ENCODE measurements at regions of chr13 and their contacts with region 1.

Region 1: DNA sequence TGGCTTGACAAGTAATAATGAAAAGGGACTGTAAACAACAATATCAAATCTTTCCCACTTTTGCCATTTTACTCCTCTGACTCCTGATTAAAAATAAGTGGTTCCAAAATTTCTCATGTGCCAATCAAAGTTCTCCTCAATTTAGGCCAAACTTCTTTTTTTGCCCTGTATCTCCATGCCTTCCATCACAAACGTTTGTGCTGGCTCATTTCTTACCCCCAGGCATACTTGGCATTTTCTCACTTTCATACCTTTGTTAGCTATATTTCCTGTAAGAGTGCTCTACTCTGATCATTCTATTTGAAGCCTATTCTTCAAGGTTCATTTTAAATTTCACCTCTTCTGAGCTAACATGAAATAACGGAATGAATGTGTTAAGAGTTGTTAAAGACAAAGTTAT is 10.0 kb upstream of the FNDC3A start:
- DNase-seq: no peak
- H3K4me3 Mint-ChIP-seq: no peak overlapping the region
- H3K27ac Mint-ChIP-seq: no peak overlapping the region
- H3K4me1 Mint-ChIP-seq: no peaks in the 10 kb centered on the region
- H3K27me3 Mint-ChIP-seq: peaks cover 2% of the 10 kb centered on the region

Region 2: DNA sequence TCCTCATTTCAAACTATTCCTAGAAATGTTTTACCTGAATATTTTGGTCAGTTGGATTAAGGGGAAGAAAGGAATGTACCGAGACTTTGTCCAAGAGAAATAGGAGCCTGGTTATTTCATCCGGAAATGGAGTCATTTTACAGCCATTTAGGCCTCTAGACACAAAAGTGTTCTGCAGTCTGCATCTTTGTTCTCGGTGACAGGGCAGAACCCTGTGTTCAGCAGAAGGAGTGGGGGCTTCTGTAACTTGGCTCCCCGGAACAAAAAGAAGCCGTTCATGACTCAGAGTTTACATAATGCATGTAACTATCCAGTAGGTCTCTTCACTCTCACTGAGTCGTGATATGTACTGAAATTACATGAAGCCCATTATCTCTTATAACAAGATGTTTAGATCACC is 11.7 kb before region 1 on chr13:
- CTCF ChIA-PET with region 1: interaction called, 3 read pairs
- intact Hi-C with region 1: loop called (anchors 1 kb)
- DNase-seq: no peak
- H3K4me3 Mint-ChIP-seq: no peak overlapping the region
- H3K27ac Mint-ChIP-seq: no peak overlapping the region
- H3K4me1 Mint-ChIP-seq: no peaks in the 10 kb centered on the region
- H3K27me3 Mint-ChIP-seq: no peaks in the 10 kb centered on the region

Region 3: GRCh38 chr13:49033101-49033500 is 67.4 kb after region 1 on chr13:
- CTCF ChIA-PET with region 1: no interaction called
- intact Hi-C with region 1: no loop called
- DNase-seq: no peak
- H3K4me3 Mint-ChIP-seq: no peak overlapping the region
- H3K27ac Mint-ChIP-seq: no peak overlapping the region
- H3K4me1 Mint-ChIP-seq: peaks cover 12% of the 10 kb centered on the region
- H3K27me3 Mint-ChIP-seq: no peaks in the 10 kb centered on the region

Region 4: DNA sequence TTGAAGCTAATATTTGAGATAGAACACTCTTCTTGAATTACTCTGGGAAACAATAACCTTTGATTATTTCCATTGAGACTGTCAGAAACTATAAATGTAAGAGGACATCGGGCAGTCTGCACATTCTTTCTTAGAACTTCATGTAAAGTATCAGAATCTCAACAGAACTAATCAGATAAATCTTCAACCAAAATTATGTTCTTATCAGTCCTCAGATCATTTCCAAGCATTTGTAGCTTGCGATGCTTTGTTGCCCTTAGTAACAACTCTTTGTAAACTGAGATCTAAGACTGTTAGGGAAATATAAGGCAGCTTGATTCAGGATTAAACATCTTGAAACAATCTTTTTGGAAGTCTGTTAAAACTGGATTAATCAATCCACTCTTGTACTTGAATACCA is 80.3 kb after region 1 on chr13:
- CTCF ChIA-PET with region 1: no interaction called
- intact Hi-C with region 1: no loop called
- DNase-seq: no peak
- H3K4me3 Mint-ChIP-seq: no peak overlapping the region
- H3K27ac Mint-ChIP-seq: no peak overlapping the region
- H3K4me1 Mint-ChIP-seq: peaks cover 37% of the 10 kb centered on the region
- H3K27me3 Mint-ChIP-seq: no peaks in the 10 kb centered on the region

Region 5: GRCh38 chr13:49165798-49166752 is 200.3 kb after region 1 on chr13:
- CTCF ChIA-PET with region 1: no interaction called
- intact Hi-C with region 1: no loop called
- DNase-seq: no peak
- H3K4me3 Mint-ChIP-seq: no peak overlapping the region
- H3K27ac Mint-ChIP-seq: no peak overlapping the region
- H3K4me1 Mint-ChIP-seq: peaks cover 2% of the 10 kb centered on the region
- H3K27me3 Mint-ChIP-seq: no peaks in the 10 kb centered on the region

Measured in activated naive CD4-positive, alpha-beta T cell treated with anti-CD3 and anti-CD28 coated beads for 36 hours (primary cell).